ENCODE measurements at regions of chr9 and their contacts with region 1.

Region 1: GRCh38 chr9:84387821-84388220 is 47.3 kb upstream of the SLC28A3 start:
- DNase-seq: no peak
- H3K4me3 Mint-ChIP-seq: no peak overlapping the region
- H3K27ac Mint-ChIP-seq: no peak overlapping the region
- H3K4me1 Mint-ChIP-seq: peaks cover 19% of the 10 kb centered on the region
- H3K27me3 Mint-ChIP-seq: no peaks in the 10 kb centered on the region
- CTCF ChIP-seq: no peak

Region 2: GRCh38 chr9:84339962-84340361 is 47.9 kb before region 1 on chr9:
- CTCF ChIA-PET with region 1: interaction called, 7 read pairs
- intact Hi-C with region 1: loop called (anchors 5 kb)
- DNase-seq: peak; percentile 43
- H3K4me3 Mint-ChIP-seq: peak overlapping the region; percentile 64
- H3K27ac Mint-ChIP-seq: peak overlapping the region; percentile 52
- H3K4me1 Mint-ChIP-seq: peaks cover 14% of the 10 kb centered on the region
- H3K27me3 Mint-ChIP-seq: no peaks in the 10 kb centered on the region
- CTCF ChIP-seq: no peak

Region 3: GRCh38 chr9:84419031-84419602 is 31.3 kb after region 1 on chr9:
- CTCF ChIA-PET with region 1: no interaction called
- intact Hi-C with region 1: no loop called
- DNase-seq: no peak
- H3K4me3 Mint-ChIP-seq: no peak overlapping the region
- H3K27ac Mint-ChIP-seq: no peak overlapping the region
- H3K4me1 Mint-ChIP-seq: no peaks in the 10 kb centered on the region
- H3K27me3 Mint-ChIP-seq: no peaks in the 10 kb centered on the region
- CTCF ChIP-seq: no peak

Measured in Calu3 (cell line).